Natural killer cell (primary cell): ENCODE measurements at regions of chr2 and their contacts with region 1.

Region 1: GRCh38 chr2:27086090-27086723 is 365 bp upstream of the KHK start:
- DNase-seq: peak; percentile 99
- ATAC-seq: peak; percentile 93 to 98 (median 96)
- H3K4me3 ChIP-seq: peak overlapping the region; percentile 65
- H3K4me3 Mint-ChIP-seq: peak overlapping the region; percentile 89
- H3K27ac ChIP-seq: peak overlapping the region; percentile 82
- H3K27ac Mint-ChIP-seq: peak overlapping the region; percentile 60 to 87
- H3K4me1 ChIP-seq: peaks cover 34% of the 10 kb centered on the region
- H3K4me1 Mint-ChIP-seq: peaks cover 23 to 29% of the 10 kb centered on the region in 2 donors
- H3K27me3 ChIP-seq: no peaks in the 10 kb centered on the region
- H3K27me3 Mint-ChIP-seq: no peaks in the 10 kb centered on the region
- CTCF ChIP-seq: peak; percentile 86

Region 2: DNA sequence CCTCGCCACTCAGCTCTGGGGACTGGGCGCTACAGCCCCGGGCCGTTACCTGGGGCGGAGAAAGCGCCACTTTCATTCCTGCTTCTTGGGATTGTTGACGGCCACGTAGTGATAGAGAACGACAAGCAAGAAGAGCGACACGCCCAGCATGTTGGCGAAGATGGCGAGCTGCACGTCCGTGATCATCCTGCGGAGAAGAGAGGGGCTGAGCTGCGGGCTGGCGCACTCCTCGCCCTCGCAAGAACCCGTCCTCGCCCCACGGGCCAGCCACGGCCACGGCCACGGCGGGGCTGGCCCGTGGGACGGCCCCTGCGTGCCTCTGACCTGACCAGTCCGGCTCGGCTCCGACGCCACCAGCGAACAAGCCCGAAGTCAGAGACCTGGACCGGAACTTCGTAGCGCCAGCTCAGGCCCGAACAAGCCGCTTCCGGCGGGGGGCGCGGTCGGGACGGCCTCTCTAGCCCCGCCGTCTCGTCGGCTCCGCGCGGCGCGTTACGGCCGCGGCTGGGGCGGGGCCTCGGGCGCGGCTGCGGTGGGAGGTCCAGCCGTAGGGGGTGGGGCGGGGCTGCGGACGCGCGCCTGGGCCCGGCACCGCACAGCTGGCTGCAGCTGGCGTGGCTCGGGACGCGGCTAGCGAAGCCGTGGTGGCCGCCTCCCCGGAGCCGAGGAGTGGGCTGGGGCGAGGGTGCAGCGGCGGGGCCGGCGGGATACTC is 14.8 kb before region 1 on chr2 and contains the start of gene OST4:
- intact Hi-C with region 1: loop called (anchors 1 kb)
- DNase-seq: peak; percentile 88 to 94
- ATAC-seq: peak; percentile 90 to 97 (median 92)
- H3K4me3 ChIP-seq: peak within 1 kb of the TSS; percentile 92
- H3K4me3 Mint-ChIP-seq: peak within 1 kb of the TSS; percentile 97
- H3K27ac ChIP-seq: peak within 1 kb of the TSS; percentile 87
- H3K27ac Mint-ChIP-seq: peak within 1 kb of the TSS; percentile 90 to 93
- H3K4me1 ChIP-seq: peaks cover 49% of the 10 kb centered on the region
- H3K4me1 Mint-ChIP-seq: peaks cover 49 to 70% of the 10 kb centered on the region in 2 donors
- H3K27me3 ChIP-seq: no peaks in the 10 kb centered on the region
- H3K27me3 Mint-ChIP-seq: no peaks in the 10 kb centered on the region
- CTCF ChIP-seq: no peak
- total RNA-seq, gene OST4: 178 to 207 (median 192) TPM

Region 3: DNA sequence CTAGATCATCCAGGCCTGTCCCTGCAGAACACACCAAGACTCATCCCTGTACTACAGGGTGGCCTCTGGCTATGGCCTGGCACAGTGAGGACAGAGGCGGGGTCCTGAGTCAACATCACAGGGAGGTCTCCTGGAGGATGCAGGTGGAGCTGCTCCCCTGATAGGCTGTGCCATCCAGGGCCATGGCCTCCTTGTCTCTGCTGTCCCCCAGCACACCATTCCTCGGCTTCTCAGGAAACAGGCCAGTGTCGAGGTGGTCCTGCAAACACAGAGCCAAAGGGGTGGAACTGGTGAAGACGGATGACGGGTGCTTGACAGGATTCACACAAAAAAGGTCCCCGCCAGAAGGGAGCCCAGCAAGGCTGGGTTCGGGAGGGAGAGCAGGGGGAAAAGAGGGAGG is 114.1 kb after region 1 on chr2:
- intact Hi-C with region 1: no loop called
- DNase-seq: no peak
- ATAC-seq: no peak
- H3K4me3 ChIP-seq: no peak overlapping the region
- H3K4me3 Mint-ChIP-seq: no peak overlapping the region
- H3K27ac ChIP-seq: no peak overlapping the region
- H3K27ac Mint-ChIP-seq: no peak overlapping the region
- H3K4me1 ChIP-seq: no peaks in the 10 kb centered on the region
- H3K4me1 Mint-ChIP-seq: no peaks in the 10 kb centered on the region
- H3K27me3 ChIP-seq: no peaks in the 10 kb centered on the region
- H3K27me3 Mint-ChIP-seq: no peaks in the 10 kb centered on the region
- CTCF ChIP-seq: no peak

Region 4: GRCh38 chr2:27211829-27212627 is 125.8 kb after region 1 on chr2 and contains the starts of genes ATRAID and SLC5A6:
- intact Hi-C with region 1: loop called (anchors 5 kb)
- DNase-seq: peak; percentile 92 to 94
- ATAC-seq: peak; percentile 89 to 96 (median 89)
- H3K4me3 ChIP-seq: peak within 1 kb of the TSS; percentile 81
- H3K4me3 Mint-ChIP-seq: peak within 1 kb of the TSS; percentile 100
- H3K27ac ChIP-seq: peak within 1 kb of the TSS; percentile 97
- H3K27ac Mint-ChIP-seq: peak within 1 kb of the TSS; percentile 99 to 100
- H3K4me1 ChIP-seq: peaks cover 19% of the 10 kb centered on the region
- H3K4me1 Mint-ChIP-seq: peaks cover 26 to 42% of the 10 kb centered on the region in 2 donors
- H3K27me3 ChIP-seq: no peaks in the 10 kb centered on the region
- H3K27me3 Mint-ChIP-seq: no peaks in the 10 kb centered on the region
- CTCF ChIP-seq: no peak
- total RNA-seq, gene ATRAID: 65.5 to 76.6 (median 76.5) TPM
- total RNA-seq, gene SLC5A6: 86.2 to 102 (median 93.7) TPM